ENCODE measurements at regions of chr2 and their contacts with region 1.

Region 1: GRCh38 chr2:207473049-207473930 is 56.5 kb upstream of the CREB1 start:
- DNase-seq: peak; percentile 22 to 39 (median 38)
- H3K4me3 ChIP-seq: no peak overlapping the region
- H3K4me3 Mint-ChIP-seq: no peak overlapping the region
- H3K27ac ChIP-seq: no peak overlapping the region
- H3K27ac Mint-ChIP-seq: peak overlapping the region in 1 of 7 donors; percentile 32
- H3K4me1 ChIP-seq: peaks cover 6% of the 10 kb centered on the region
- H3K4me1 Mint-ChIP-seq: peaks cover 4 to 11% (median 9%) of the 10 kb centered on the region in 4 donors
- H3K27me3 ChIP-seq: no peaks in the 10 kb centered on the region
- H3K27me3 Mint-ChIP-seq: no peaks in the 10 kb centered on the region

Region 2: DNA sequence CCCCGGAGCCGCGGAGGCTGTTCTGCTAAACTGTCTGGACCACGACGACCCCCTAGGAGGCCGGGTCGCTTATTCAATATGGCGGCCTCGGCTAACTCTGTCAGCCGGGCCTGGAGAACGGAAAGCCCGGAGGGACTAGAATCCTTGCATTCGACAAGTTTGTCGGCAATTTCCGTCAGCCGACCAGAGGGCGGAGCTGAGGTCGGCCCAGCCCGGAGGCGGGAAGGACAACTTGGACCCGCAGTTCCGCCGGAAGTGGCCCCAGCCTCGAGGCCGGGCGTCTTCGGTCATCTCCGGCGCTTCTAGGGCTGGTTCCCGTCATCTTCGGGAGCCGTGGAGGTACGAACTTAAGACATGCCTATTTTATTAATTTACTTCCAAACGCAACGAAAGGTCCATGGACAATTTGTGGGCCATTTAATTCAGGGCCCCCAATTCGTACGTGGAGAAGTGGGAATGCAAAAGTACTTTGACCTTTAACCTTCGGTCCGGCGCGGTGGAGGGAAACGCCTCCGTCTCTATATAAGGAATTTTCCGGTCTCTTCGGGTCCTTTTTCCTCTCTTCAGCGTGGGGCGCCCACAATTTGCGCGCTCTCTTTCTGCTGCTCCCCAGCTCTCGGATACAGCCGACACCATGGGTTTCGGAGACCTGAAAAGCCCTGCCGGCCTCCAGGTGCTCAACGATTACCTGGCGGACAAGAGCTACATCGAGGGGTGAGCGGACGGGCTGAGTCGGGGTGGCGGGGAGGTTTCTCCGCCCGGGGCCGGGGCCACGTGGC is 1313.8 kb before region 1 on chr2 and contains the starts of genes EEF1B2 and NDUFS1:
- CTCF ChIA-PET with region 1: no interaction called
- POLR2A ChIA-PET with region 1: no interaction called
- intact Hi-C with region 1: loop called (anchors 5 kb)
- DNase-seq: peak; percentile 96 to 97 (median 97)
- H3K4me3 ChIP-seq: peak within 1 kb of the TSS; percentile 69 to 78
- H3K4me3 Mint-ChIP-seq: peak within 1 kb of the TSS; percentile 97 to 100 (median 100)
- H3K27ac ChIP-seq: peak within 1 kb of the TSS; percentile 94
- H3K27ac Mint-ChIP-seq: peak within 1 kb of the TSS; percentile 98 to 100 (median 99)
- H3K4me1 ChIP-seq: peaks cover 47% of the 10 kb centered on the region
- H3K4me1 Mint-ChIP-seq: peaks cover 38 to 71% (median 56%) of the 10 kb centered on the region in 4 donors
- H3K27me3 ChIP-seq: no peaks in the 10 kb centered on the region
- H3K27me3 Mint-ChIP-seq: no peaks in the 10 kb centered on the region
- total RNA-seq, gene EEF1B2: 947 to 1,026 TPM
- total RNA-seq, gene NDUFS1: 53.4 to 57.6 TPM

Region 3: DNA sequence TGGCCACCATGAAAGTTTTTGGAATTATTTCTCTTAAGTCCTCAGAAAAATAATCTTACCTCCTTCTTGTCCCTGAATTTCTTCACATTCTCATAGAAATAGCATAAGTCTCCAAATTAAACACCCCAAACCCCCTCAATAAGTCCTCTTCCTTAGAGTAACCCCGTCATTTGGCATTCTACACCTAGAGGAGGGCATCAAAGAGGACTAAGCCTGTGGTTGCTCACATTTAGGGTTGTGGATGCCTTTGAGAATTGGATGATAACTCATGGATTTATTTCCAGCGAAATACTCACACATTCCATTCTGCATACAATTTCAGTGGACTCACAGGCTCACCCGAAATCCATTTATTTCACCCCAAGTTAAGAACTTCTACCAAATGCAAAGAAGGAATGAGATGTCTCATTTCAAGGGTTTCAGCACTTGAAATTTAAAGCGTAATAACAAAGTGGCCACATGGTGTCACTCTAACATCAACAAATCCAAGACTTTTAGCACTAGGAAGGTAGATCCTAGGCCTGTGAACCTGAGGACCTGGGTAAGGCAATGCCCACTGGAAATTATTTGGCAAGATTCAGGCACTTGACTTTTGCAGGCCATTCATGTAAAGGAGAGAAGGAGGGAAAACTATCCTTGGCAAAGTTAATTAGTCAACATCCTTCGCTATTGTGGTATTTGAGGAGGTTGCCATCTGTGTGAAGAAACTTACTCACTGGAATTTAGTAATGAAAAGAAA is 779.7 kb before region 1 on chr2:
- CTCF ChIA-PET with region 1: interaction called, 17 read pairs
- POLR2A ChIA-PET with region 1: no interaction called
- intact Hi-C with region 1: loop called (anchors 1 kb)
- DNase-seq: peak in 4 of 5 donors; percentile 40 to 54 (median 50)
- H3K4me3 ChIP-seq: no peak overlapping the region
- H3K4me3 Mint-ChIP-seq: no peak overlapping the region
- H3K27ac ChIP-seq: no peak overlapping the region
- H3K27ac Mint-ChIP-seq: no peak overlapping the region
- H3K4me1 ChIP-seq: peaks cover 10% of the 10 kb centered on the region
- H3K4me1 Mint-ChIP-seq: peaks cover 0 to 4% (median 4%) of the 10 kb centered on the region in 4 donors
- H3K27me3 ChIP-seq: no peaks in the 10 kb centered on the region
- H3K27me3 Mint-ChIP-seq: peaks cover 2 to 5% of the 10 kb centered on the region in 2 donors

Region 4: DNA sequence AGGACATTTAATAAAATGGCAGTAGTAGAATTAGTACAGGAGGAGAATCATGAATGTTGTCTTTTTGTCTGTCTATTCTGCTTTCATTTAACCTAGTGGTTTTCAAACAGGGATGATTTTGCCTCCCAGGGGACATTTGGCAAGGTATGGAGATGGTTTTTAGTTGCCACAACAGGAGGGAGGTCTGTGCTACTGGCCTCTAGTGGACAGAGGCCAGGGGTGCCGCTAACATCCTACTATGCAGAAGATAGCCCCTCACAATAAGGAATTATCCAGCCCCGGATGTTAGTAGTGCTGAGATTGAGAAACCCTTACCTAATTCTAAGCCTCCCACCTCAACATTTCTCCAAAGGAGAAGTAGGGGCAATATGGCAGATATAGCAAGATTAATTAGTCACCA is 689.6 kb before region 1 on chr2:
- CTCF ChIA-PET with region 1: interaction called, 10 read pairs
- POLR2A ChIA-PET with region 1: no interaction called
- intact Hi-C with region 1: no loop called
- DNase-seq: no peak
- H3K4me3 ChIP-seq: no peak overlapping the region
- H3K4me3 Mint-ChIP-seq: no peak overlapping the region
- H3K27ac ChIP-seq: no peak overlapping the region
- H3K27ac Mint-ChIP-seq: peak overlapping the region in 1 of 7 donors; percentile 17
- H3K4me1 ChIP-seq: no peaks in the 10 kb centered on the region
- H3K4me1 Mint-ChIP-seq: peaks cover 5 to 18% (median 15%) of the 10 kb centered on the region in 4 donors
- H3K27me3 ChIP-seq: no peaks in the 10 kb centered on the region
- H3K27me3 Mint-ChIP-seq: no peaks in the 10 kb centered on the region

Region 5: DNA sequence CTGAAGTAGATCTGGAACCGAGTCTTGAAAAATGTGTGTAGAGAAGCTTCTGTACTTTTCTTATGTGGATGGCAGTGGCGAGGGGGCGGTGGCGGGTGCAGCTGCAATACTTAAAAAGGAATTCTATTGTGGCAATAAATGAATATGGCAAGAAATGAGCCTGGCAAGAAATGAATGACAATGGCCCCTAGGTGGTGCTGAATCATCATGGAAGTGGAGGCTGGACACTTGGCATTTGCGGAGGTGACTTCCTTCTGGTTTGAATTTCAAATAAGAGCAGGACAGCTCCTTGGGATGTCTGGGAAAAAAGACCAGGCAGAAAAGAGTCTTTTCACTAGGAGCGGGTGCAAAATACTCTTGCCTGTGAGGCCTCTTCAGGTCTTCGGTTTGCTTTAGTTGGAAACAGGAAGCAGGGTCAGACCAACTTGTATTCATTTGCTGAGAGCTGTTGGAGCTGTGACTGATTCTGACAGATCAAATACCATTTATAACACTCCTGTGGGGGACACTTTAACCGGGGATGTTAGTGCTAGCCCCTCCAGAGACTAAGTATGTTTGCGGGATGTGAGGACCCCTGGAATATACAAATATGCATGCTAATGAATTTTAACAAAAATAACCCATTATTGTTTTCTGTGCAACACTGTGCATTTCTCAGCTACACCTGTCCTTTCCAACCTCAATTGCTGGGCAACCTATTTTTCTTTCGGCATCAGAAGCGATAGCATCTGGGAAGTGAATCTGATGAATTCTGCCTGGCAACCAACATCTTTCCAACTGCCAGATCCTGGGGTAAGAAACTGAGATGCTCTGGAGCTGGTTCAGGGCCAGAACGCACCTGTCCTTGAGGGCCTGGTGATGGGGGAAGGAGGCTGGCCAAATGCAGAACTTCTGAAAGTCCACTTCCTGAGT is 672.5 kb before region 1 on chr2:
- CTCF ChIA-PET with region 1: interaction called, 44 read pairs
- POLR2A ChIA-PET with region 1: no interaction called
- intact Hi-C with region 1: loop called (anchors 1 kb)
- DNase-seq: peak in 4 of 5 donors; percentile 37 to 41 (median 39)
- H3K4me3 ChIP-seq: no peak overlapping the region
- H3K4me3 Mint-ChIP-seq: peak overlapping the region; percentile 53 to 72 (median 63)
- H3K27ac ChIP-seq: no peak overlapping the region
- H3K27ac Mint-ChIP-seq: peak overlapping the region in 3 of 7 donors; percentile 22 to 67 (median 41)
- H3K4me1 ChIP-seq: peaks cover 3% of the 10 kb centered on the region
- H3K4me1 Mint-ChIP-seq: peaks cover 7 to 15% (median 9%) of the 10 kb centered on the region in 4 donors
- H3K27me3 ChIP-seq: no peaks in the 10 kb centered on the region
- H3K27me3 Mint-ChIP-seq: no peaks in the 10 kb centered on the region

Region 6: GRCh38 chr2:206981739-206982340 is 491.4 kb before region 1 on chr2:
- CTCF ChIA-PET with region 1: interaction called, 10 read pairs
- POLR2A ChIA-PET with region 1: no interaction called
- intact Hi-C with region 1: loop called (anchors 1 kb)
- DNase-seq: peak; percentile 33 to 49 (median 39)
- H3K4me3 ChIP-seq: no peak overlapping the region
- H3K4me3 Mint-ChIP-seq: no peak overlapping the region
- H3K27ac ChIP-seq: no peak overlapping the region
- H3K27ac Mint-ChIP-seq: no peak overlapping the region
- H3K4me1 ChIP-seq: no peaks in the 10 kb centered on the region
- H3K4me1 Mint-ChIP-seq: peaks cover 0 to 6% (median 2%) of the 10 kb centered on the region in 4 donors
- H3K27me3 ChIP-seq: no peaks in the 10 kb centered on the region
- H3K27me3 Mint-ChIP-seq: peaks cover 0 to 2% of the 10 kb centered on the region in 2 donors

Region 7: GRCh38 chr2:207143215-207144172 is 329.8 kb before region 1 on chr2:
- CTCF ChIA-PET with region 1: interaction called, 4 read pairs
- POLR2A ChIA-PET with region 1: no interaction called
- intact Hi-C with region 1: loop called (anchors 2 kb)
- DNase-seq: peak; percentile 74 to 85 (median 77)
- H3K4me3 ChIP-seq: peak overlapping the region in 1 of 2 donors; percentile 15
- H3K4me3 Mint-ChIP-seq: peak overlapping the region; percentile 66 to 84 (median 74)
- H3K27ac ChIP-seq: peak overlapping the region; percentile 69
- H3K27ac Mint-ChIP-seq: peak overlapping the region; percentile 84 to 96 (median 93)
- H3K4me1 ChIP-seq: peaks cover 58% of the 10 kb centered on the region
- H3K4me1 Mint-ChIP-seq: peaks cover 48 to 81% (median 67%) of the 10 kb centered on the region in 4 donors
- H3K27me3 ChIP-seq: no peaks in the 10 kb centered on the region
- H3K27me3 Mint-ChIP-seq: no peaks in the 10 kb centered on the region

Measured in CD4-positive, alpha-beta memory T cell (primary cell).